HepG2 (cell line): ENCODE measurements at regions of chr4 and their contacts with region 1.

Region 1: GRCh38 chr4:158850800-158851644 is 82.2 kb downstream of the FNIP2 start:
- DNase-seq: no peak
- ATAC-seq: no peak; the same call in 2 of the 3 replicates
- H3K4me3 ChIP-seq: no peak overlapping the region
- H3K27ac ChIP-seq: no peak overlapping the region
- H3K4me1 ChIP-seq: peaks cover 3% of the 10 kb centered on the region; the same call in 1 of the 2 replicates
- H3K27me3 ChIP-seq: no peaks in the 10 kb centered on the region
- CTCF ChIP-seq: peak; percentile 47
- EP300 ChIP-seq: no peak
- POLR2A ChIP-seq: no peak
- RAD21 ChIP-seq: no peak

Region 2: DNA sequence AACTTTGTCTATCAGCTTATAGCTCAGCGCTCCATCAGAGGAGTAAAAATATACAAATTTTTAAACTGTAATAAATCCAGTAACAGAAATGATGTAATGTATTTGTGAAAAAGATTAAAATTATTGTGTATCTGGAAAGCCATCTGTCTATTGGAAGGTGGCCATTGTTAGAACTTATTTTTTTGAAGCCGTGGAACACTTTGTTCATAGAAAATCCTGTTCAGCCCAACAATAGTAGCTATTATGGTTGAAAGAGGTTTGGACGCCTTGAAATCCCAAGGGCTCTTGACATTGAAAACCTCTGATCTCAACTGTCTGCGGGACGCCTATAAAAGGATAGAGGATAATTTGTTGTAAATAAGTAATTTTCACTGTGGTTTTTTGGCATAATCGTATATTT is 350.1 kb after region 1 on chr4:
- CTCF ChIA-PET with region 1: interaction called, 16 read pairs
- POLR2A ChIA-PET with region 1: no interaction called
- in situ Hi-C with region 1: loop called (anchors 5 kb)
- intact Hi-C with region 1: no loop called
- DNase-seq: no peak
- ATAC-seq: no peak
- H3K4me3 ChIP-seq: no peak overlapping the region
- H3K27ac ChIP-seq: no peak overlapping the region
- H3K4me1 ChIP-seq: no peaks in the 10 kb centered on the region
- H3K27me3 ChIP-seq: no peaks in the 10 kb centered on the region
- CTCF ChIP-seq: no peak
- EP300 ChIP-seq: no peak
- POLR2A ChIP-seq: no peak
- RAD21 ChIP-seq: no peak